Mucosa of descending colon (tissue), 3 donors: ENCODE measurements at regions of chr5 and their contacts with region 1.

Region 1: DNA sequence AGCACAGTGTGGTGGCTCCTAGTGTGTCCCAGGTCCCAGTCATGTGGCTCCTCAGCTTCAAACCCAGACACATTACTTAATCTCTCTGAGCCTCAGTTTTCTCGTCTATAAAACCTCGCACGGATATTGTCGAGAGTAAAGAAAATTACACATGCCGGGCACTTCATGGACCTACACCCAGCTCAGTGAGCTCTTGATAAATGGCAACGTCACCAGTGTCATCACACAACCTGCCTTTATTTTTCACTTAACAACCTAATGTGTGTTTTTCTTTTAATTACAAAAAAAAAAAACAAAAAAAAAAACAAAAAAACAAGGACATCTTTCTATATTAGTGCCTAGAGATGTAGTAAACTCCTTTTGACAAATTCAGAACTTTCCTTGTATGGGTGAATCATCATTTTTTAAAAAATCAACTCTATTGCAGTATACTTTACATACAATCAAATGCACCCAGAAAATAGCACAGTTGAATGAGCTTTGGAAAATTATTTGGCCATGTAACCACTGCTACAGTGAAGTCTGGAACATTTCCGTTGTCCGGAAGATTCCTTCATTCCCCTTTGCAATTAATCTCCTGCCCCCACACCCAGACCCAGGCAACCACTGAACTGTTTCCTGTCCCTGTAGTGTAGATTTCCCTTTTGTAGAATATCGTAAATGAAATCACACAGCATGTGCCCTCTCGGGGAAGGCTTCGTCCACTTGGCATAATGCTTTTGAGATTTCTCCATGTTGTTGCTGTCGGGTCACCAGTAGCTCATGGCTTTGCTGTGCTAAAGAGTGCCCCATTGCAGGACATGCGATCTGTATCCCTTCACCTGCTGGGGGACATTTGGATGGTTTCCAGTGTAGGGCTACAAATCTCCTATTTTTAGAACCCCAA is 100.4 kb upstream of the LARP1 start:
- DNase-seq: no peak
- ATAC-seq: peak; percentile 26
- H3K4me3 ChIP-seq: no peak overlapping the region
- H3K4me1 ChIP-seq: peaks cover 6% of the 10 kb centered on the region
- CTCF ChIP-seq: no peak

Region 2: GRCh38 chr5:154603978-154604679 is 50.6 kb before region 1 on chr5:
- intact Hi-C with region 1: no loop called
- DNase-seq: no peak
- ATAC-seq: no peak
- H3K4me3 ChIP-seq: no peak overlapping the region
- H3K4me1 ChIP-seq: no peaks in the 10 kb centered on the region
- CTCF ChIP-seq: no peak

Region 3: GRCh38 chr5:154783774-154784460 is 129.2 kb after region 1 on chr5:
- intact Hi-C with region 1: no loop called
- DNase-seq: peak in 1 of 3 donors; percentile 12
- ATAC-seq: peak; percentile 37
- H3K4me3 ChIP-seq: no peak overlapping the region
- H3K4me1 ChIP-seq: peaks cover 25% of the 10 kb centered on the region
- CTCF ChIP-seq: no peak

Region 4: GRCh38 chr5:154806176-154806575 is 151.4 kb after region 1 on chr5:
- intact Hi-C with region 1: loop called (anchors 5 kb)
- DNase-seq: no peak
- ATAC-seq: no peak
- H3K4me3 ChIP-seq: no peak overlapping the region
- H3K4me1 ChIP-seq: no peaks in the 10 kb centered on the region
- CTCF ChIP-seq: no peak

Region 5: DNA sequence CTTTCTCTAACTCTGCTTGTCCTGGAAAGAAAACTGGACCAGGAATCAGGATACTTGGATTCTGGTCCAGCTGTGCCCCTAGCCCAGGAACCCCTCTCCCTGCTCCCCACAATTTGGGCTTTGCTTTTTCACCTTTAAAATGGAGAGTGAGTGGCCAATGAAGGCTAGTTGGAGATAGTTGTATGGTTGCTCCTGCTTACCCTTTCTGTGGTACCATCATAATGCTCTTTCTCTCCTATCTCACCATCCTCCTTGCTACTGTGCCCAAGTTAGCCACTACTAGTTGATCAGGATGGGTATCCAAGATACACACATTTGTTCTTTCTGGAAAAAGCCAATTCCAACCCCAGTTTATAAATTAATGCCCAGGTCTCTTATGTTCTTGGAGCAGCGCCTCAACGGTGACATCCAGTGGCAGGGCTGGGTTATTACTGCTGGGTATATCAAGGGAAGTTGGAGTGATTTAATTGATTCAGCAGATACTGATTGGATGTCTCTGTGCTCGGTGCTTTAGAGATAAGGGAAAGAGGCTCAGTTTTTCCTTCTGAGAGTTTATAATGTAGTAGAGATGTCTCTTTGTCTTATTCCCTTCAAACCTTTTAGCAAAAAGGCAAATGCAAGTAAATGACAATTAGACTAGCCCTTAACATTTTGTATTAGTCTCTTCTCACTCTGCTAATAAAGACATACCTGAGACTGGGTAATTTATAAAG is 157.1 kb after region 1 on chr5:
- intact Hi-C with region 1: loop called (anchors 5 kb)
- DNase-seq: peak in 2 of 3 donors; percentile 70 to 75
- ATAC-seq: peak; percentile 90
- H3K4me3 ChIP-seq: no peak overlapping the region
- H3K4me1 ChIP-seq: no peaks in the 10 kb centered on the region
- CTCF ChIP-seq: peak; percentile 83